CD14-positive monocyte (primary cell): ENCODE measurements at regions of chr1 and their contacts with region 1.

Region 1: GRCh38 chr1:21165646-21166045 is 11.1 kb downstream of the EIF4G3 start:
- DNase-seq: peak in 2 of 3 donors; percentile 46 to 61
- H3K4me3 ChIP-seq: no peak overlapping the region
- H3K4me3 Mint-ChIP-seq: no peak overlapping the region
- H3K27ac ChIP-seq: peak overlapping the region in 1 of 2 donors; percentile 44
- H3K27ac Mint-ChIP-seq: peak overlapping the region; percentile 22 to 92 (median 62)
- H3K4me1 ChIP-seq: peaks cover 8 to 10% of the 10 kb centered on the region in 2 donors
- H3K4me1 Mint-ChIP-seq: peaks cover 15% of the 10 kb centered on the region
- H3K27me3 ChIP-seq: no peaks in the 10 kb centered on the region
- H3K27me3 Mint-ChIP-seq: no peaks in the 10 kb centered on the region
- CTCF ChIP-seq: no peak

Region 2: DNA sequence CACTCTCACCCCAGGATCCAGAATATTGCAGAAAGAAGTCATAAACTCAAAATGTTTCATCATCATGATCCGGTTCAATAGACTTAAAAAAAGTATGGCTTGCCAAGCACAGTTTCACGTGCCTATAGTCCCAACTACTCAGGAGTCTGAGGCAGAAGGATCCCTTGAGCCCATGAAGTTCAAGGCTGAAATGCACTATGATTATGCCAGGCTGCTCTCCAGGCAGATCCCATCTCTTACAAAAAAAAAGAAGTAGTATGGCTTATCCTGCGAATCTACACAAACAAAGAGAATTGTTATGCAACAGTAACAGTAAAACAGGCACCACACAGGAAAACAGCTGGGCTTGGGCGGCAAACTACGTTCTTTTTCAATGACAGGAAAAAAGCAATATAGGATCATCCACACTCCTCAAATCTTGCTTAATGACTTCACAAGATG is 65.1 kb before region 1 on chr1:
- intact Hi-C with region 1: loop called in 1 of 2 experiments (anchors 5 kb)
- DNase-seq: peak in 2 of 3 donors; percentile 46 to 50
- H3K4me3 ChIP-seq: peak overlapping the region in 1 of 3 experiments; percentile 52
- H3K4me3 Mint-ChIP-seq: peak overlapping the region; percentile 28 to 67
- H3K27ac ChIP-seq: peak overlapping the region; percentile 16 to 85
- H3K27ac Mint-ChIP-seq: peak overlapping the region; percentile 82 to 94 (median 84)
- H3K4me1 ChIP-seq: peaks cover 35% of the 10 kb centered on the region in 2 donors
- H3K4me1 Mint-ChIP-seq: peaks cover 34% of the 10 kb centered on the region
- H3K27me3 ChIP-seq: no peaks in the 10 kb centered on the region
- H3K27me3 Mint-ChIP-seq: peaks cover 0 to 2% (median 1%) of the 10 kb centered on the region in 3 donors
- CTCF ChIP-seq: no peak

Region 3: DNA sequence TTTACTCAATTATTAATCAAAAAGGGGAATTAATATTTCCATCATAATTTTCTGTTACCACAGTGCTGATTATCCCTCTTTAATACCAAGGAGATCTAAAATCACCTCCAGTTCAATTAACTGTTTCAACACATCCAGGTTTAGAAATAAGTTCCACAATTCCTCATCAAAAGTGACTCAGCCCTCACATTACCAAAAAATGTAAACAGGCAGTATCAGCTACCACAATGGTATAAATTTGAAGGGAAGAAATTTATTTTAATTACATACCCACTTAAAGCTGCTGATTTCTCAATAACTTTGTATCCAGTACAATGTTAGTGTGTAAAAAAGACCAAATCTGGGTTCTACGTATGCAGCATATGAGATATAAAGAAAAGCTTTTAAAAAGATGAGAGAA is 40.8 kb before region 1 on chr1:
- intact Hi-C with region 1: loop called in 1 of 2 experiments (anchors 5 kb)
- DNase-seq: peak; percentile 3 to 34 (median 26)
- H3K4me3 ChIP-seq: no peak overlapping the region
- H3K4me3 Mint-ChIP-seq: no peak overlapping the region
- H3K27ac ChIP-seq: no peak overlapping the region
- H3K27ac Mint-ChIP-seq: peak overlapping the region in 3 of 7 donors; percentile 10 to 60 (median 57)
- H3K4me1 ChIP-seq: peaks cover 19 to 25% of the 10 kb centered on the region in 2 donors
- H3K4me1 Mint-ChIP-seq: peaks cover 23% of the 10 kb centered on the region
- H3K27me3 ChIP-seq: no peaks in the 10 kb centered on the region
- H3K27me3 Mint-ChIP-seq: peaks cover 0 to 3% (median 0%) of the 10 kb centered on the region in 3 donors
- CTCF ChIP-seq: no peak

Region 4: GRCh38 chr1:21344750-21345443 is 179.3 kb after region 1 on chr1:
- intact Hi-C with region 1: no loop called
- DNase-seq: no peak
- H3K4me3 ChIP-seq: peak overlapping the region; percentile 14 to 75 (median 48)
- H3K4me3 Mint-ChIP-seq: peak overlapping the region; percentile 92 to 94
- H3K27ac ChIP-seq: no peak overlapping the region
- H3K27ac Mint-ChIP-seq: peak overlapping the region in 5 of 7 donors; percentile 45 to 87 (median 50)
- H3K4me1 ChIP-seq: peaks cover 31 to 39% of the 10 kb centered on the region in 2 donors
- H3K4me1 Mint-ChIP-seq: peaks cover 41% of the 10 kb centered on the region
- H3K27me3 ChIP-seq: peaks cover 49 to 89% of the 10 kb centered on the region in 2 donors
- H3K27me3 Mint-ChIP-seq: peaks cover 45 to 65% (median 58%) of the 10 kb centered on the region in 3 donors
- CTCF ChIP-seq: no peak